Caco-2 (cell line): ENCODE measurements at regions of chr7 and their contacts with region 1.

Region 1: GRCh38 chr7:90244909-90245851 is at the start of gene CFAP69:
- DNase-seq: peak; percentile 92 to 95
- H3K4me3 ChIP-seq: peak within 1 kb of the TSS; percentile 57
- H3K4me3 Mint-ChIP-seq: peak within 1 kb of the TSS; percentile 87
- H3K27ac Mint-ChIP-seq: peak within 1 kb of the TSS; percentile 91
- H3K4me1 ChIP-seq: peaks cover 40% of the 10 kb centered on the region
- H3K4me1 Mint-ChIP-seq: peaks cover 12% of the 10 kb centered on the region
- H3K27me3 ChIP-seq: no peaks in the 10 kb centered on the region
- H3K27me3 Mint-ChIP-seq: no peaks in the 10 kb centered on the region
- CTCF ChIP-seq: peak; percentile 21 to 26
- total RNA-seq, gene CFAP69: 4.8 and 7.4 TPM in 2 replicates

Region 2: GRCh38 chr7:90262438-90262837 is 17.3 kb after region 1 on chr7:
- CTCF ChIA-PET with region 1: no interaction called
- POLR2A ChIA-PET with region 1: no interaction called
- intact Hi-C with region 1: no loop called
- DNase-seq: peak in 1 of 2 experiments; percentile 24
- H3K4me3 ChIP-seq: no peak overlapping the region
- H3K4me3 Mint-ChIP-seq: no peak overlapping the region
- H3K27ac Mint-ChIP-seq: no peak overlapping the region
- H3K4me1 ChIP-seq: peaks cover 9% of the 10 kb centered on the region
- H3K4me1 Mint-ChIP-seq: no peaks in the 10 kb centered on the region
- H3K27me3 ChIP-seq: no peaks in the 10 kb centered on the region
- H3K27me3 Mint-ChIP-seq: no peaks in the 10 kb centered on the region
- CTCF ChIP-seq: peak; percentile 45 to 48

Region 3: DNA sequence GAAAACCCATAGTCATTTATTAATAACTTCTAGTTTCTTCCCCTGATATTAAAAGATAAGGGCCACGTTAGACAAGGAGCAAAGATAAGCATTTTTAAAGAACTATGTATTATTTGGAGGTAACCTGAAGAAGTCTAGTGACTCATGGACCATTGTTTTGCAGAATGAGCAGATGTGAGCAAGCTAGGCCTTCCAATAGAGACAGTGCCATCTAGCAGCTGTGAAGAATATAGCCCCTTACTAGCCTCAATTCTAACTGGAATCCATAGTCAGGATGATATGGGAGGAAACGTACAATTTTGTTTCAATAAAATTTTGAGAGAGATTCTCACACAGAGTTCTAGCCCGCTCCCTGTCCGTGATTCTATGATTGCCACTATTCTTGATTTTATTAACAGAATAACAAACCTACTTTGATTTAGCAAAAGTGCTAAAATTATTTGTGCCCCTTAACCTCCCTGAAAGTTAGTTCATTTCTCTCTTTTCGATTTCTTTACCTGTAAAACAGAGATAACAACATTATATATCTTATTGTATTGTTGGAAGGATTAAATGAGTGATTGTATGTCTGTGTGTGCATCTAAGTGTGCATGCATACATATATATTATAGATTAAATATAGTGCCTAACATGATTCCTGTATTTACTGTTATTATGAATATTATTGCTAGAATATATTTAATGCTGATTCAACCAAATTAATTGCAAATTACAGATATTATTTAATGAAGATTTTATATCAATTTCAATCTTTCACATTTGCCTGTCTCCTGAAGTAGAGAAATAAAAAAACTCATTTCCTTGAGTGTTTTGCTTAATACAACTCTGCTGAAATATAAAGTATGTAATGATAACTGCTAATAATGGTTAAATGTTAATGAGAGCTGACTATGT is 53.2 kb after region 1 on chr7:
- CTCF ChIA-PET with region 1: no interaction called
- POLR2A ChIA-PET with region 1: no interaction called
- intact Hi-C with region 1: loop called (anchors 1 kb)
- DNase-seq: peak; percentile 41 to 52
- H3K4me3 ChIP-seq: no peak overlapping the region
- H3K4me3 Mint-ChIP-seq: no peak overlapping the region
- H3K27ac Mint-ChIP-seq: no peak overlapping the region
- H3K4me1 ChIP-seq: peaks cover 18% of the 10 kb centered on the region
- H3K4me1 Mint-ChIP-seq: peaks cover 15% of the 10 kb centered on the region
- H3K27me3 ChIP-seq: no peaks in the 10 kb centered on the region
- H3K27me3 Mint-ChIP-seq: no peaks in the 10 kb centered on the region
- CTCF ChIP-seq: peak; percentile 67 to 84

Region 4: GRCh38 chr7:90337106-90337505 is 91.9 kb after region 1 on chr7:
- CTCF ChIA-PET with region 1: no interaction called
- POLR2A ChIA-PET with region 1: no interaction called
- intact Hi-C with region 1: no loop called
- DNase-seq: no peak
- H3K4me3 ChIP-seq: no peak overlapping the region
- H3K4me3 Mint-ChIP-seq: no peak overlapping the region
- H3K27ac Mint-ChIP-seq: peak overlapping the region; percentile 6
- H3K4me1 ChIP-seq: no peaks in the 10 kb centered on the region; the same call in 1 of the 2 replicates
- H3K4me1 Mint-ChIP-seq: no peaks in the 10 kb centered on the region
- H3K27me3 ChIP-seq: no peaks in the 10 kb centered on the region
- H3K27me3 Mint-ChIP-seq: peaks cover 5% of the 10 kb centered on the region
- CTCF ChIP-seq: no peak